ENCODE measurements at regions of chr6 and their contacts with region 1.

Region 1: DNA sequence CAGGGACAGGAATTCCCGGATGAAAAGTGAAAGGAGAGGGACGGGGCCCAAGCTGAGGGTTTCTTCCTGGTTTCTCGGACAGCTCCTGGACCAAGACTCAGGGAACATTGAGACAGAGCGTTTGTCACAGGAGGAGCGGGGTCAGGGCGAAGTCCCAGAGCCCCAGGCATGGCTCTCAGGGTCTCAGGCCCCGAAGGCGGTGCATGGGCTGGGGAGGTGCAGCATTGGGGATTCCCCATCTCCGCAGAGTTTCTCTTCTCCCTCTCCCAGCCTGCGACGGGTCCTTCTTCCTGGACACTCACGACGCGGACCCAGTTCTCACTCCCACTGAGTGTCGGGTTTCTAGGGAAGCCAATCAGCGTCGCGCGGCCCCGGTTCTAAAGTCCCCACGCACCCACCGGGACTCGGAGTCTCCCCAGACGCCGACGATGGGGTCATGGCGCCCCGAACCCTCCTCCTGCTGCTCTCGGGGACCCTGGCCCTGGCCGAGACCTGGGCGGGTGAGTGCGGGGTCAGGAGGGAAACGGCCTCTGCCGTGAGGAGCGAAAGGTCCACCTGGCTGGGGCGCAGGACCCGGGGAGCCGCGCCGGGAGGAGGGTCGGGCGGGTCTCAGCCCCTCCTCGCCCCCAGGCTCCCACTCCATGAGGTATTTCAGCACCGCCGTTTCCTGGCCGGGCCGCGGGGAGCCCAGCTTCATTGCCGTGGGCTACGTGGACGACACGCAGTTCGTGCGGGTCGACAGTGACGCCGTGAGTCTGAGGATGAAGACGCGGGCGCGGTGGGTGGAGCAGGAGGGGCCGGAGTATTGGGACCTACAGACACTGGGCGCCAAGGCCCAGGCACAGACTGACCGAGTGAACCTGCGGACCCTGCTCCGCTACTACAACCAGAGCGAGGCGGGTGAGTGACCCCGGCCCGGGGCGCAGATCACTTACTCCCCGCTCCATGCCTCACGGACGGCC is 54.6 kb upstream of the POLR1H start:
- DNase-seq: peak; percentile 41 to 52
- ATAC-seq: peak; percentile 68 to 88 (median 81)
- H3K4me3 ChIP-seq: peak overlapping the region; percentile 47 to 92 (median 64)
- H3K27ac ChIP-seq: peak overlapping the region in 6 of 10 donors; percentile 20 to 60 (median 48)
- H3K4me1 ChIP-seq: peaks cover 2 to 21% (median 16%) of the 10 kb centered on the region in 9 donors
- H3K27me3 ChIP-seq: peaks cover 0 to 39% (median 14%) of the 10 kb centered on the region in 7 donors
- CTCF ChIP-seq: peak in 2 of 9 donors; percentile 13 to 21

Region 2: DNA sequence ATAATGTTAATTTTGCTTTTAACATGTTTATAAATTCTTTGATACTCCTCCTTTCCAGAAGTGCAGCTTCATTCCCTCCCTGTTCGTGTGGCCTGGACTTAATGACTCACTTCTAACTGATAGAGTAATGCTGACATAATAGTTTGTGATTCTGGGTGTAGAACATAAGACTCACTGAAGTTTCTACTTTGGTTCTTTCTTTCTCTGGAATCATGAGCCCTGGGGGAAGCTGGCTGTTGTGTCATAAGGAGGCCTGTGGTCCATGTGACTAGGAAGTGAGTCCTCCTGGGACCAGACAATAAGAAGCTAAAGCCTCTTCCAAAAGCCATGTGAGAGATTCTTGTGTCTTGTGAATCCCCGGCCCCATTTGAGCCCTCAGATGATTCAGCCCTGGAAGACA is 209.3 kb before region 1 on chr6:
- intact Hi-C with region 1: no loop called
- DNase-seq: no peak
- ATAC-seq: no peak
- H3K4me3 ChIP-seq: no peak overlapping the region
- H3K27ac ChIP-seq: no peak overlapping the region
- H3K4me1 ChIP-seq: peaks cover 0 to 11% (median 7%) of the 10 kb centered on the region in 9 donors
- H3K27me3 ChIP-seq: peaks cover 0 to 46% (median 37%) of the 10 kb centered on the region in 7 donors
- CTCF ChIP-seq: no peak

Region 3: DNA sequence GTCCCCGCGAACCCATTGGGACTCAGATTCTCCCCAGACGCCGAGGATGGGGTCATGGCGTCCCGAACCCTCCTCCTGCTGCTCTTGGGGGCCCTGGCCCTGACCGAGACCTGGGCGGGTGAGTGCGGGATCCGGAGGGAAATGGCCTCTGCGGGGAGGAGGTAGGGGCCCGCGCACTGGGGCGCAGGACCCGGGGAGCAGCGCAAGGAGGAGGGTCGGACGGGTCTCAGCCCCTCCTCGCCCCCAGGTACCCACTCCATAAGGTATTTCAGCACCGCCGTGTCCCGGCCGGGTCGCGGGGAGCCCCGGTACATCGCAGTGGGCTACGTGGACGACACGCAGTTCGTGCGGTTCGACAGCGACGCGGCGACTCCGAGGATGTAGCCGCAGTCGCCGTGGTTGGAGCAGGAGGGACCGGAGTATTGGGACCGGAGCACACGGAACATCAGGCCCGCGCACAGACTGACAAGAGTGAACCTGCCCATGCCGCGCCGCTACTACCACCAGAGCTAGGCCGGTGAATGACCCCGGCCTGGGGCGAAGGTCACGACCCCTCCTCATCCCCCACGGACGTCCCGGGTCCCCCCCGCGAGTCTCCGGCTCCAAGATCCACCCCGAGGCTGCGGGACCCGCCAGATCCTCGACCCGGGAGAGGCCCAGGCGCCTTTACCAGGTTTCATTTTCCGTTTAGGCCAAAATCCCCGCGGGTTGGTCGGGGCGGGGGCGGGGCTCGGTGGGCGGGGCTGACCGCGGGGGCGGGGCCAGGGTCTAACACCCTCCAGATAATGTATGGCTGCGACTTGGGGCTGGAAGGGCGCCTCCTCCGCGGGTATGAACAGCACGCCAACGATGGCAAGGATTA is 79.8 kb before region 1 on chr6:
- intact Hi-C with region 1: loop called in 1 of 10 experiments (anchors 10 kb)
- DNase-seq: peak; percentile 74 to 77
- ATAC-seq: peak; percentile 85 to 96 (median 90)
- H3K4me3 ChIP-seq: peak overlapping the region; percentile 44 to 81 (median 62)
- H3K27ac ChIP-seq: peak overlapping the region; percentile 68 to 97 (median 88)
- H3K4me1 ChIP-seq: peaks cover 0 to 23% (median 12%) of the 10 kb centered on the region in 9 donors
- H3K27me3 ChIP-seq: no peaks in the 10 kb centered on the region
- CTCF ChIP-seq: no peak

Measured in heart right ventricle (tissue), 16 donors.